Calu3 (cell line): ENCODE measurements at regions of chr2 and their contacts with region 1.

Region 1: DNA sequence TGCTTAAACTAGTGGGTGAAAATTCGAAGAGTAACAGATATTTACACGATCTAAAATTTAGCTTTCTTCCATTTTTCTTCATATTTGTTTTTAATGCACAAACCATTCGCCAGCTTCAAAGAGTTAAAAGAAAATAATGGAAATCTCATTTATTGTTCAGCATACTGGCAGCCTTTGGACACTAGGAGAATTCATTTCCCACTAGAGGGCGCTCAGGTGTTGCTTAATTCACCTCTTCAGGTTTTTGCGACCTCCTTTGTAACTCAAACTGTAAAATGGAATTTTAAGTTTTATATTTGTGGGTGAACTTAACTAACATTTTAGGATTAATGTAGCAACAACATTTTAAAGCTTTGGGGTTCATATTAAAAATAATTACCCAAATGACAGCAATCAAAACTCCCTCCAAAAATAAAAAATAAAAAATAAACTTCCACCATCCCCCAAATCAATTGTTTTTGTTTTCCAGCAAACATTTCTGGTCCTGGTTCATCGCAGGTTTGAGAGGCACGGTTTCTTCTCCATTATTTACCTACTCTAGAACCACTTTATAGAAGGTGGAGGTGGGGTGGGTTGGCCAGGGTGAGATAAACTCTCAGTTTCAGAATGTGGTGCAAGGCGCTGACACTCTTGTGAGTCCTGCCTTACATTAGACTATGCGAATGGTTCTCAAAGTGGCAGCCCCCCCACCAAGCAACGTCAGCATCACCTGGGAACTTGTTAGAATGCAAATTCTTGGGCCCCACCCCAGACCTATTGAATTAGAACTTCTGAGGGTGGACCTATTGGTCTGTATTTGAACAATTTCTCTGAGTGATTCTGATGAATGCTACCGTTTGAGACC is 24.7 kb upstream of the PNPT1 start:
- DNase-seq: peak; percentile 75
- H3K4me3 Mint-ChIP-seq: no peak overlapping the region
- H3K27ac Mint-ChIP-seq: no peak overlapping the region
- H3K4me1 Mint-ChIP-seq: no peaks in the 10 kb centered on the region
- H3K27me3 Mint-ChIP-seq: no peaks in the 10 kb centered on the region
- CTCF ChIP-seq: no peak

Region 2: DNA sequence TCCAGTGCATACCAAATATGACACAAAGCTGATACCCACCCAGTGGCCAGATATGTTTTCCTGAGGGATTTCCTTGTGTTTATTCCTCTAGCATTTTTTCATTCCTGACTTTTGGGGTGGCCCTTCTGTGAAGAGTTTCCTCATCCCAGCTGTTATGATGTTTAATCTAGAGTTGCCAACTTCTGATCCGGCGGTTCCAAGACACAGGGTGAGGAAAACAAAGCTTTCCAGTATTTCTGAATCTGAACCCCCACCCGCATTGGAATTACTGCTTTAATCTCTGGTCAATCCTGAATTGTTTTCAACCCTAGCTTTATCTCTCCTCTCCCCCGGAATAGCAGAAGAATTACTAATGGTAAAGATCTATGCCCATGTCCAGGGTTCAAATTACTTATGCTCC is 14.5 kb after region 1 on chr2:
- CTCF ChIA-PET with region 1: no interaction called
- intact Hi-C with region 1: no loop called
- DNase-seq: no peak
- H3K4me3 Mint-ChIP-seq: no peak overlapping the region
- H3K27ac Mint-ChIP-seq: no peak overlapping the region
- H3K4me1 Mint-ChIP-seq: no peaks in the 10 kb centered on the region
- H3K27me3 Mint-ChIP-seq: no peaks in the 10 kb centered on the region
- CTCF ChIP-seq: no peak

Region 3: DNA sequence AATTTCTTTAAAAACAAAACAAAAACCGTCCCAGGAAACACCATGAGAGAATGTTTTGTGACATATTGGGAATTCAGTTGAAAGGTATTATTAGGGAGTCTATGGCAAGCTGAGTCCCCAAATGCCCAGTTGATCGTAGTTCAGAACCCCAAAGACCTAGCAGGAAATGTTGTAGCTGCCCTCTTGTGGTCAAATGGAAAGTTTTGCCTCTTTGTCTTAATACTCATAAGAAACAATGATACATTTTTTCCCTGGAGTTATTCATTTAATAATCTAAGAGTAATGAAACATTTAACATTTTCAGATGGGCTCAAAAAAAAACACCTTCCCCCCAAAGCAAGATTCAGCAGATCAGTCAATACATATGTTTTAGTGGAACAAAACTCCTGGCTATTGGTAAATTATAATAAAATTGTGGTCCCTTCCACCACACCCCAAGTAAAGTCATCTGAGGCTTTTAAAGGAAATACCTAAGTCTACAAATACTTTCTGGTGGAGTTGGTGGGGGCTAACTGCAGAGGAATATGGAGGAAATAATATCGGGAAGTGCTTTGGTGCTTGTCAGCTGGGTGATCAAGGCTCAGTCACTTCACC is 243.0 kb after region 1 on chr2:
- CTCF ChIA-PET with region 1: no interaction called
- intact Hi-C with region 1: loop called (anchors 2 kb)
- DNase-seq: peak; percentile 23
- H3K4me3 Mint-ChIP-seq: no peak overlapping the region
- H3K27ac Mint-ChIP-seq: peak overlapping the region; percentile 46
- H3K4me1 Mint-ChIP-seq: peaks cover 40% of the 10 kb centered on the region
- H3K27me3 Mint-ChIP-seq: no peaks in the 10 kb centered on the region
- CTCF ChIP-seq: peak; percentile 21

Region 4: DNA sequence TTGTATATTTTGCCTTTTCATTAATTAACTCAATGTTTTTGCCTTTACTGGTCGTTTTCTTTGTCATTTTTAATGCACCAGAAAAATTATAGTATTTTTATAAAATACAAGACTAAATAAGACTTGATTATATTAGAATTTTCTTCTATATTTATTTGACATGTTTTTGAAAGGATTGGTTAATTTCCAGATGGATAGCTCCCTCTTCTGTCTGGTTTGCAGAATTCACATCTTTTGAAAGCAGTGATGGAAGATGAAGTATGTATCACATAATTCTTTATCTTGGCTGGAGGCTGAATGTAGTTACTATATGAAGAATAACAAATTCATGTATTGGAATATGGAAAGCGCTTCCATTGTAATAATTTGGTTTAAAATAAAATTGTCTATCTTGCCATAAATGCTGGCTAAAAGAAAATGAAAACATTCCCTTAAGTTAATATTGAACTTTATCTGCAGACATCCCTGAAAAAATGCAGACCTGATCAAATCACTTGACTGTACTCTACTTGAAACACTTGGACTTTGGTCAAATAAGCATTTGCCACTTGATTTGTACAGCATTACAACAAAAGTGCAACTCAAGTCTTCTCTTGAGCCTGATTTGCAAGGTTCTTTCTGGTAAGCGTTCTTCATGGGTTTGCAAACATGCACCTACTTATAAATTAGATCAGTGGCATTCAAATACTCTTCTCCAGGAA is 291.5 kb after region 1 on chr2:
- CTCF ChIA-PET with region 1: no interaction called
- intact Hi-C with region 1: loop called (anchors 1 kb)
- DNase-seq: no peak
- H3K4me3 Mint-ChIP-seq: no peak overlapping the region
- H3K27ac Mint-ChIP-seq: no peak overlapping the region
- H3K4me1 Mint-ChIP-seq: no peaks in the 10 kb centered on the region
- H3K27me3 Mint-ChIP-seq: no peaks in the 10 kb centered on the region
- CTCF ChIP-seq: peak; percentile 26